ENCODE measurements at regions of chr10 and their contacts with region 1.

Region 1: GRCh38 chr10:9331583-9332008 is 1277.1 kb downstream of the GATA3 start:
- DNase-seq: peak; percentile 16
- H3K4me3 ChIP-seq: no peak overlapping the region
- H3K27ac ChIP-seq: no peak overlapping the region
- H3K27me3 ChIP-seq: peaks cover 2% of the 10 kb centered on the region
- CTCF ChIP-seq: peak; percentile 82

Region 2: GRCh38 chr10:9243941-9244411 is 87.6 kb before region 1 on chr10:
- CTCF ChIA-PET with region 1: no interaction called
- POLR2A ChIA-PET with region 1: no interaction called
- DNase-seq: no peak
- H3K4me3 ChIP-seq: no peak overlapping the region
- H3K27ac ChIP-seq: no peak overlapping the region
- H3K27me3 ChIP-seq: no peaks in the 10 kb centered on the region
- CTCF ChIP-seq: no peak

Region 3: GRCh38 chr10:10667466-10667865 is 1335.9 kb after region 1 on chr10:
- CTCF ChIA-PET with region 1: interaction called, 10 read pairs
- POLR2A ChIA-PET with region 1: no interaction called
- DNase-seq: no peak
- H3K4me3 ChIP-seq: no peak overlapping the region
- H3K27ac ChIP-seq: no peak overlapping the region
- H3K27me3 ChIP-seq: no peaks in the 10 kb centered on the region
- CTCF ChIP-seq: no peak

Region 4: DNA sequence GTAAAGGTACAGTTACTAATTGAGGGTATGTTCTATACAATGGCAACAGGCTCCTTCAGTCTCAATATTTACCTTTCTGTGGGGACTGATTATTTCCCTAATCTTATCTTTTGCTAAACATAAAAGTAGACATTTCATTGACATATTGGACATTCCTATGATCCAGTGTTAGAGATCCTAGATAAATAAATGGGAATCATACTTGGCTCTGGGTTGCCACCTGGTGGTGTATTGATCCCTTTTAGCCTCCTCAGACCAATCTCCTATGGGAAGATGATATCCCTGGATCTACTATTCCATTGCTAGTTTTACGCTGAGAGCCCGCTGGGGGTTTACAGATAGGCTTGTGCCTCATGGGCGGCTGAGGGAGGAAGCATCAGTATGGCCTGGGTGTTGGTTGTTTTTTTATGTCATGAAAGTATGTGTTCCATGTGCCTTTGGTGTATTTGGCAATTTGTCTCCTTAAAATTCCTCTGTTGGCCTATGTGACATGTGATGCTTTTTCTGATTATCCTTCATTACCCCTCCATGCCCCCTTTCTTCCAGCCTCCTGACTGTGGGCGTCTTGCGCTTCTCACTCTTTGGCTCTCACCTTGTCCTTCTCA is 1704.9 kb after region 1 on chr10:
- CTCF ChIA-PET with region 1: interaction called, 11 read pairs
- POLR2A ChIA-PET with region 1: no interaction called
- DNase-seq: peak; percentile 16
- H3K4me3 ChIP-seq: no peak overlapping the region
- H3K27ac ChIP-seq: no peak overlapping the region
- H3K27me3 ChIP-seq: no peaks in the 10 kb centered on the region
- CTCF ChIP-seq: peak; percentile 67

Region 5: DNA sequence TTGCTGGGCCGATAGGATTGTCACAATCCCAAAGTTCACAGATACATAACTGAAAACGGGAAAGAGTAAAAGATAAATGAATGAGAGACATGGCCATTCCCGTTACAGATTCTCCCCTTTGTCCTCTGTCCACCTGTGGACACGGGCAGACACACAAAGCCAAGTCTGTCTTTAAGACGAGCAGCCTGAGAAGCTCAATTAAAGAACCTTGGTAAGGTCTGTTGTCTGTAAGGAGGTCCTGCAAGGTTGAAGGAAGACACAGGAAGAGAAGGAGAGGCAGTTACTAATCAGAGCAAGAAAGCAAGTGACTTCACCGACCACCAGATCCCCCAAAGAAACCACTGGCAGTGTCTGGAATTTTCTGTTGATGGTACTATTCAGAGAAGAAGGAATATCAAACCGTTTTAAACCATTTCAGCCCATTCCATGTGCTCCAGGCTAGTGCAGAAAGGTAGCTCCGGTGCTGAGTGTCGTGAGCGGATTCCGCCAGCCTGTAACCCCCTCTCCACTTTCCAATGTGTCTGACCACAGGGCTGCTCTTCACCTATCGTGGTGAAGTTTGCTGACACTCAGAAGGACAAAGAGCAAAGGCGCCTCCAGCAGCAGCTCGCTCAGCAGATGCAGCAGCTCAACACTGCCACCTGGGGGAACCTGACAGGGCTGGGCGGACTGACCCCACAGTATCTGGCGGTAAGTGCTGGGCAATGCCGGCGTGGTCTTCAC is 1938.7 kb after region 1 on chr10:
- CTCF ChIA-PET with region 1: interaction called, 22 read pairs
- POLR2A ChIA-PET with region 1: no interaction called
- DNase-seq: peak; percentile 27
- H3K4me3 ChIP-seq: no peak overlapping the region
- H3K27ac ChIP-seq: no peak overlapping the region
- H3K27me3 ChIP-seq: no peaks in the 10 kb centered on the region
- CTCF ChIP-seq: peak; percentile 99

Measured in AG04450 (cell line).